ENCODE measurements at regions of chr2 and their contacts with region 1.

Region 1: DNA sequence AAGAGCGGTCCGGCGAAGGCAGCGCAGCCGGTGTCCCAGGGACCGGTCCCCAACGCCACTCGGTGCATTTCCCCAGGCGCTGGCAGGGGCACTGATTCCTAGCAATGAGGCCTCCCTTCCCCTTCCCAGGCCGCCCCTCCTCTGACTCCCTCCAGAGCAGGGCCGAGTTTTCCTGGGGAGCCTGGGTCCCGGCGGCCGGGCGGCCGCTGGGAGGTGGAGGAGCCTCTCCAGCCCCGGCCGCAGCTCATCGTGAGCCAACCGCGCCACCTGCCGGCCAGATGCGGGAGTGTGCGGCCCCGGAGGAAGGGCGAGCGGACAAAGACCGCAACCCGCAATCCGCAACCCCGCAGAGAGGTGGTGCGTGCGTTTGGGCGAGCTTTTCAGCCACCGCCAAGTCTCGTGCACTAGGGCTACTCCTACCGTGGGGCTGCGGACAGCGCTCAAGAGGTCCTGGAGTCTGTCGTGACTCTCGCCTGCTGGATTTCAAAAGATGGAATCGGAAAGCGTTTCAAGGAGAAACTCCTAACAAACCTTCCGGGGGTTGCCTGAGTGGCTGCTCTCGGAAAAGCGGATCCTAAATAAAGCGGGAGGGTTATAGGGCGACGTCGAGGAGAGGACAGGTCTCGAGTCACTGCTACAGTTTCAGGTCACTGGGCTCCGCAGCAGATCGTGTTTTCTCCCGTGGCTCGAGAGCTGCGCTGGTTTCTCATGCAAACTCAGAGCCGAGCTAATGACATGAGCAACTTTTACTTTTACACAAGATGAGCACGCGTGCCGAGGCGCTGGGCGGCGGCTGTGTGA is 1.5 kb upstream of the EPHA4 start:
- DNase-seq: peak; percentile 92

Region 2: GRCh38 chr2:219997341-219997851 is 1576.2 kb before region 1 on chr2:
- intact Hi-C with region 1: loop called (anchors 10 kb)
- DNase-seq: no peak

Region 3: GRCh38 chr2:220687231-220687843 is 886.3 kb before region 1 on chr2:
- intact Hi-C with region 1: loop called (anchors 1 kb)
- DNase-seq: peak; percentile 77

Region 4: GRCh38 chr2:220985561-220985960 is 588.1 kb before region 1 on chr2:
- intact Hi-C with region 1: no loop called
- DNase-seq: no peak

Region 5: GRCh38 chr2:221235941-221236340 is 337.7 kb before region 1 on chr2:
- intact Hi-C with region 1: loop called (anchors 5 kb)
- DNase-seq: no peak

Region 6: DNA sequence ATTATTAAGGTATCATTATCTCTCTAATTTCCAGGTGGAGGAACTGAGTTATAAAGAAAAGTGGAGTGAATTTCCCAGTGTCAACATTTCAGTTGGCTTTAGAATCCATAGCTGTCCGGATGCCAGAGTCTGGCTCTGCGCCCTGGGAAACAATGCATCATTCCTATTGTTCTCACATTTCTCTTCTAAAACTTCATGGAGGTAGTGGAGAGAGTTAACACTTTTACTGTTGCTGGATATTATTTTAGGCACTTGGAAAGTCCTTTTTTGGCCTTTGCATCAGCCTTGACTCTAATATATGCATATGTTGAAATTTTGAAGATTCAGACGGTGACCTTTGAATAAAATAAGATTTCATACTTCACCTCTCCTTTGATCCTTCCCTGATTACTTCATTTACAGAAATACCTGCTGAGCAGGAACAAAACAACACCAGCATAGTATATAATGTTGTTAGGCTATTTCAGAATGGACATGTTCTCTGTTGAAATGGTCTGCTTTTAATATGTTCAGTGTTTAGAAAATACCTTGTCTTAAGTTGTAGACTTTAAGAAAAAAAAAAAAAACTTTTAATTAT is 150.3 kb before region 1 on chr2:
- intact Hi-C with region 1: loop called (anchors 5 kb)
- DNase-seq: no peak

Region 7: DNA sequence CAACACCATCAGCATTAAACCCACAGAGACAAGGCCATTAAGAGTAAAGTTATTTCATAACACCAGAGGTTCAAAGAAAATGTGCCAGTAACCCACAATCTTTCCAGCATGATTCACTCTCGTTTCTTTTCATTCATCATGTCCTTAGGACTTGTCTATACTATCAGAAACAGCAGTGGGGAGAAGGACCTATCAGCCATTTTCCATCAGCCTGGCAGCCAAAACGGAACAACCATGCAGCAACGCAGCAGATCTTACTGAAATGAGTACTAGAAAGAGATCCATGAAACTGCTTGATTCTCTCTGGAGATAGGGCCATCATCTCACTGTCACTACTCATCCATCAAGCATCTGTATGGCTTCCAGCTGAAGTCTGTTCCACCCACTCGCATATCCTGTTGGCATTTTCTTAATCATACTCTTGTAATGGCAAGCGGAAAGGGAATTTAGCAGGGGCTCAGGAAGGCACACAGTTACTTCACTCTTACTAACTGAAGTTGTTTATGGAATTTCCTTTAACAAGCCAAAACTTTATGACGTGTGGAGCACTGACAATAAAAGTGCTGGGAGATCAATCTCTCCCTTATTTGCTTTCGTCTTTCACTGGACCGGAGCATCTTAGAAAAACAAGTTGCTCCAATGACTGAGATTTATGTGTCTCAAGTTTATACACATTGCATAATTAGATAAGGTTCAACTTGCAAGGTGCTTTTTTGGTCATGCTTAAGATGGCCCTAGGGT is 71.2 kb before region 1 on chr2:
- intact Hi-C with region 1: no loop called
- DNase-seq: no peak

Region 8: DNA sequence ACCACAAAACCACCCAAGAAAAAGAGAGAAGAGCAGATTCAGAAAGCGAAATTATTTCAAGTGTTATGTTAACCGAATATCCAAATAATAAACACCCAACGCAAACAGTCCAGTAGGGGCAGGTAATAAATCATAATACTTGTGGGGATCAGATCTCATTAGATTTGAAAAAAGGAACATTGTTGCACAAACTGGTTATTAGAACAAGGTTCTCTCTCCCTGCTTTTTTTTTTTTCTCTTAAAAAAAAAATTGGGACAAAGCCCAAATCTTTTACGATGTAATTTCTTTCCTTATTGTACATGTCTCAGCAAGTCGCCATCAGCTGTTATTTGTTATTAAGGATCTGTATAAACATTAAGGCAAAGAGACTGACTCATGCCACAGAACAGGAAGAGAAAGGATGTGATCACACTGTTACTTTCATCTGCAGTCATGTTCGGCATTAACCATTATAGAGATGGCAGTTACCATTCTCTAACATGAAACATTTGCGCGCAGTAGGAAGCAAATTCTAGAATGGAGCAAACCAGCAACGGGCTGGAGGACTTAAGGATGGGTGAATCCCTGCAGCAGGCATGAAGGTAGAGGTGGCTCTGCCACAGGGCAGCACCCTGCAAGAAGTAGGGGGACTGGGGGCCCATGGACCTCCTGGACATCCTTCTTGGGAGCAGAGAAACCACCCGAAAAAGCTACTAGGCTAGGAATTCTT is 43.5 kb before region 1 on chr2:
- intact Hi-C with region 1: loop called (anchors 5 kb)
- DNase-seq: no peak

Measured in cardiac septum (tissue), 1 donor.